H1 (cell line): ENCODE measurements at regions of chr3 and their contacts with region 1.

Region 1: GRCh38 chr3:187679638-187680396 is 9.6 kb upstream of the SST start:
- DNase-seq: peak; percentile 63 to 96
- H3K4me3 ChIP-seq: no peak overlapping the region
- H3K27ac ChIP-seq: no peak overlapping the region
- H3K4me1 ChIP-seq: no peaks in the 10 kb centered on the region; a peak in 1 of 7 replicates
- H3K27me3 ChIP-seq: peaks cover 0 to 3% (median 0%) of the 10 kb centered on the region in 4 experiments; a peak in 1 of 7 replicates
- CTCF ChIP-seq: peak; percentile 86 to 98 (median 96)
- EP300 ChIP-seq: no peak
- POLR2A ChIP-seq: no peak
- RAD21 ChIP-seq: peak; percentile 99

Region 2: GRCh38 chr3:187255314-187255713 is 424.5 kb before region 1 on chr3:
- CTCF ChIA-PET with region 1: interaction called, 11 read pairs
- POLR2A ChIA-PET with region 1: no interaction called
- DNase-seq: no peak
- H3K4me3 ChIP-seq: no peak overlapping the region
- H3K27ac ChIP-seq: no peak overlapping the region
- H3K4me1 ChIP-seq: peaks cover 0 to 3% (median 0%) of the 10 kb centered on the region in 4 experiments; a peak in 1 of 7 replicates
- H3K27me3 ChIP-seq: no peaks in the 10 kb centered on the region
- CTCF ChIP-seq: no peak
- EP300 ChIP-seq: no peak
- POLR2A ChIP-seq: no peak
- RAD21 ChIP-seq: no peak

Region 3: DNA sequence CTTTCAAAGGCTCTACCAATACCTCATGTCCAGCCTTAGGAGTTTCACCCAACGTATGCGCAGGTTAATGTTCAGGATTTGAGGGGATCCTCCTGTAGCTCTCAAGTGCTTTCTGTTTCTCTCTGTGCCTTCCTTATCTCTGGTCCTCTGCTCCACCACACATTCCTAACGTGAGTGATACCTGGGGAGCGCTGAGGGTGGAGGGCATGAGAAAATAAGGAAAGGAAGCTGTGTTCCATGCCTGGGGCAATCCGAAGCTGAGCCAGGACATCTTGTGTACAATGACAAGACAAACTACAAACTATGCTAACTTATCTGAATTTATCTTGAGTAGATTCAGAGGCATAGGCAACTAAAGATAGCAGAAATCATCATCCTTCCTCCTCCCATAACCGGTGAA is 146.0 kb before region 1 on chr3:
- CTCF ChIA-PET with region 1: interaction called, 10 read pairs
- POLR2A ChIA-PET with region 1: no interaction called
- DNase-seq: no peak
- H3K4me3 ChIP-seq: no peak overlapping the region
- H3K27ac ChIP-seq: no peak overlapping the region
- H3K4me1 ChIP-seq: 0 out of 7 replicates have a peak, but pooled peaks cover 0 to 3% (median 0%) of the 10 kb centered on the region in 4 experiments
- H3K27me3 ChIP-seq: no peaks in the 10 kb centered on the region
- CTCF ChIP-seq: no peak
- EP300 ChIP-seq: no peak
- POLR2A ChIP-seq: no peak
- RAD21 ChIP-seq: no peak

Region 4: DNA sequence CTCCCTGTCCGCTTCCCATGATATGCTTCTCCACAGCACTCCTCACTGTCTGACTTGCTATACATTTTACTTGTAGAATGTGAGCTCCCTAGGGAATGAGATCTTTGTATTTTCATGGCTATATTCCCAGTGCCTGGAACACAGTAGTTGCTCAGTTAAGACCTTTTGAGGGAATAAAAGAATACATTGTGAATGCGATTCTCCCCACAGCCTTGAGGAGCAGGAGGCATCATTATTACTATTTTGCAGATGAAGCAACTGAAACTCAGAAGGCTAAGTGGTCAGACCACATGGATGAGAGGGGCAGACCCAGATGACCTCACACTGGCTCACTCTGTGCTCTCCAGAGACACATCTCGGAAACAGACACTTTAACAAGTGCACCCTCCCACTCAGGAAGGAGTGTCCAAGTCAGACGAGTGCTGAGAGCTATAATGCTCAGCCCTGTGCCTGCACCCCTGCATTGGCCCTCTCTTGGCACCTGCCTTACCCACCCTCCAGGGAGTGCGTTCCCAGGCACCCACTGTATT is 56.5 kb before region 1 on chr3:
- CTCF ChIA-PET with region 1: interaction called, 33 read pairs
- POLR2A ChIA-PET with region 1: no interaction called
- DNase-seq: no peak
- H3K4me3 ChIP-seq: no peak overlapping the region
- H3K27ac ChIP-seq: no peak overlapping the region
- H3K4me1 ChIP-seq: peaks cover 4 to 14% (median 10%) of the 10 kb centered on the region in 4 experiments
- H3K27me3 ChIP-seq: peaks cover 2 to 31% (median 22%) of the 10 kb centered on the region in 4 experiments; a peak in 5 of 7 replicates
- CTCF ChIP-seq: no peak
- EP300 ChIP-seq: no peak
- POLR2A ChIP-seq: no peak
- RAD21 ChIP-seq: no peak

Region 5: DNA sequence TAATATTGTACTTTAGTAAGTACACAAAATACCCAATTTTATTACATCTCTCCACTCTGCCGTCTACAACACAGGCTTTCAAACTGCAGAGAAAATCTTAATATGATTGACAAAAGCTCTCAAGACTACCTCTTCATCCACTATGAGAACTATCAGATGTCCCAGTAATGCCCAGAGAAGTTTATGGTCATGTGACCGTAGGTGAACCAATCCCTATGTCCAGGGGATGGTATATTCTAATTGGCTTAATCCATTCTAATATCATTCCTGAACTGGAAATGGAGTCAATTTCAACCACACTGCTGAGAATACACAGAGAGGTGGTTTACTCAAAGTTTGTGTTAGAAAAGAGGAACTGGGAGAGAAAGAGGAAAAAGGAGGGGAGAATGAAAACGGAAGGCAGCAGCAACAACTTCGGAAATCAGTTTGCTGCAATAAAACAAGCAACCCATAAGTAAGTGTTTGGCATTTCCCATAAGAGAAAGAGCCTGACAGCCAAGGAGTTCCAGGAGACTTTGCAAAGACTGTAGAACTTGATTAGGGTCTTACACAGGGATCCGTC is 16.9 kb before region 1 on chr3:
- CTCF ChIA-PET with region 1: interaction called, 57 read pairs
- POLR2A ChIA-PET with region 1: no interaction called
- DNase-seq: no peak
- H3K4me3 ChIP-seq: no peak overlapping the region
- H3K27ac ChIP-seq: no peak overlapping the region
- H3K4me1 ChIP-seq: no peaks in the 10 kb centered on the region
- H3K27me3 ChIP-seq: no peaks in the 10 kb centered on the region; a peak in 1 of 7 replicates
- CTCF ChIP-seq: no peak
- EP300 ChIP-seq: no peak
- POLR2A ChIP-seq: no peak
- RAD21 ChIP-seq: no peak

Region 6: GRCh38 chr3:187714404-187714979 is 34.7 kb after region 1 on chr3:
- CTCF ChIA-PET with region 1: interaction called, 108 read pairs
- POLR2A ChIA-PET with region 1: no interaction called
- DNase-seq: peak in 1 of 2 experiments; percentile 86
- H3K4me3 ChIP-seq: no peak overlapping the region
- H3K27ac ChIP-seq: no peak overlapping the region
- H3K4me1 ChIP-seq: peaks cover 0 to 4% (median 4%) of the 10 kb centered on the region in 4 experiments; a peak in 4 of 7 replicates
- H3K27me3 ChIP-seq: no peaks in the 10 kb centered on the region
- CTCF ChIP-seq: peak; percentile 64 to 92 (median 92)
- EP300 ChIP-seq: no peak
- POLR2A ChIP-seq: no peak
- RAD21 ChIP-seq: peak; percentile 99